ENCODE measurements at regions of chr7 and their contacts with region 1.

Region 1: GRCh38 chr7:35694781-35695472 is at the start of gene HERPUD2:
- DNase-seq: peak; percentile 92
- H3K4me3 Mint-ChIP-seq: peak within 1 kb of the TSS; percentile 94
- H3K27ac Mint-ChIP-seq: peak within 1 kb of the TSS; percentile 96
- H3K4me1 Mint-ChIP-seq: peaks cover 39% of the 10 kb centered on the region
- H3K27me3 Mint-ChIP-seq: no peaks in the 10 kb centered on the region
- total RNA-seq, gene HERPUD2: 48.0 to 49.8 TPM

Region 2: GRCh38 chr7:35707422-35707821 is 12.5 kb after region 1 on chr7:
- CTCF ChIA-PET with region 1: interaction called, 5 read pairs
- POLR2A ChIA-PET with region 1: interaction called, 109 read pairs
- DNase-seq: no peak
- H3K4me3 Mint-ChIP-seq: no peak overlapping the region
- H3K27ac Mint-ChIP-seq: no peak overlapping the region
- H3K4me1 Mint-ChIP-seq: peaks cover 34% of the 10 kb centered on the region
- H3K27me3 Mint-ChIP-seq: peaks cover 3% of the 10 kb centered on the region

Region 3: GRCh38 chr7:35723011-35723410 is 28.1 kb after region 1 on chr7:
- CTCF ChIA-PET with region 1: interaction called, 37 read pairs
- POLR2A ChIA-PET with region 1: interaction called, 81 read pairs
- DNase-seq: no peak
- H3K4me3 Mint-ChIP-seq: no peak overlapping the region
- H3K27ac Mint-ChIP-seq: peak overlapping the region; percentile 23
- H3K4me1 Mint-ChIP-seq: peaks cover 56% of the 10 kb centered on the region
- H3K27me3 Mint-ChIP-seq: no peaks in the 10 kb centered on the region

Region 4: GRCh38 chr7:35801392-35802101 is 106.6 kb after region 1 on chr7:
- CTCF ChIA-PET with region 1: interaction called, 15 read pairs
- POLR2A ChIA-PET with region 1: interaction called, 295 read pairs
- DNase-seq: peak; percentile 79
- H3K4me3 Mint-ChIP-seq: peak overlapping the region; percentile 95
- H3K27ac Mint-ChIP-seq: peak overlapping the region; percentile 90
- H3K4me1 Mint-ChIP-seq: peaks cover 44% of the 10 kb centered on the region
- H3K27me3 Mint-ChIP-seq: no peaks in the 10 kb centered on the region

Measured in activated CD4-positive, alpha-beta memory T cell treated with anti-CD3 and anti-CD28 coated beads, Interleukin-2, amount 10 ng/mL, durations not matched to agents 7 days and 5 days (primary cell).